Calu3 (cell line): ENCODE measurements at regions of chr4 and their contacts with region 1.

Region 1: GRCh38 chr4:23135792-23136645 is 443.3 kb downstream of the GBA3 start:
- DNase-seq: peak; percentile 30
- H3K4me3 Mint-ChIP-seq: no peak overlapping the region
- H3K27ac Mint-ChIP-seq: no peak overlapping the region
- H3K4me1 Mint-ChIP-seq: peaks cover 4% of the 10 kb centered on the region
- H3K27me3 Mint-ChIP-seq: no peaks in the 10 kb centered on the region
- CTCF ChIP-seq: no peak

Region 2: GRCh38 chr4:22787753-22788375 is 348.2 kb before region 1 on chr4:
- CTCF ChIA-PET with region 1: no interaction called
- intact Hi-C with region 1: no loop called
- DNase-seq: no peak
- H3K4me3 Mint-ChIP-seq: no peak overlapping the region
- H3K27ac Mint-ChIP-seq: no peak overlapping the region
- H3K4me1 Mint-ChIP-seq: no peaks in the 10 kb centered on the region
- H3K27me3 Mint-ChIP-seq: peaks cover 13% of the 10 kb centered on the region
- CTCF ChIP-seq: no peak

Region 3: DNA sequence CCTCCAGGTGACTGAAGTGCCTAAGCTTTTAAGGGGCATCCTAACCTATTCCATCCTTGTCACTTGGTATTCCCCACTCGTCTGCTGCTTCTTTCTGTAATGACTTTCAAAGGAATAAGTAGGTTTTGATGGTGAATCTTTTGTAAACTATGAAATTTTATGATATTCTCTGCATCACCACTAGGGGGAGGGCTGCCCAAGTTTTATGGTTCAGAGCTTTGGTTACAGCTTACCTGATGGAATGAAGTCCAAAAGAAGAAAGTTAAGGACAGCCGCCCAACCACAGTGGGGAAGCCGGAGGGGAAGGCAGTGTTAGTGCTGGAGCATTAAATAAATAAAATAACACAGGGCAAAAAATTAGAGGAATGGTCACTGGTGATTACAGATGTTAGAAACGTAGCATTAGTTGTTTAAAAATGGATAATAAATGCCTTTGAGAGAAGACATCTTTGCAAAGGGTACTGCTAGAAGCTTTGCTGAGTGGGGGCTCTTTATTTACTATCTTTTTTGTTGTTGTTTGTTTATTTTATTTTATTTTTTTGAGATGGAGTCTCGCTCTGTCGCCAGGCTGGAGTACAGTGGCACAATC is 238.4 kb before region 1 on chr4:
- CTCF ChIA-PET with region 1: interaction called, 7 read pairs
- intact Hi-C with region 1: loop called (anchors 5 kb)
- DNase-seq: peak; percentile 54
- H3K4me3 Mint-ChIP-seq: no peak overlapping the region
- H3K27ac Mint-ChIP-seq: peak overlapping the region; percentile 10
- H3K4me1 Mint-ChIP-seq: peaks cover 9% of the 10 kb centered on the region
- H3K27me3 Mint-ChIP-seq: no peaks in the 10 kb centered on the region
- CTCF ChIP-seq: peak; percentile 34

Region 4: GRCh38 chr4:23039813-23040212 is 96.2 kb before region 1 on chr4:
- CTCF ChIA-PET with region 1: no interaction called
- intact Hi-C with region 1: loop called (anchors 10 kb)
- DNase-seq: peak; percentile 38
- H3K4me3 Mint-ChIP-seq: no peak overlapping the region
- H3K27ac Mint-ChIP-seq: peak overlapping the region; percentile 89
- H3K4me1 Mint-ChIP-seq: peaks cover 20% of the 10 kb centered on the region
- H3K27me3 Mint-ChIP-seq: no peaks in the 10 kb centered on the region
- CTCF ChIP-seq: no peak

Region 5: GRCh38 chr4:23219779-23220408 is 83.9 kb after region 1 on chr4:
- CTCF ChIA-PET with region 1: no interaction called
- intact Hi-C with region 1: no loop called
- DNase-seq: no peak
- H3K4me3 Mint-ChIP-seq: no peak overlapping the region
- H3K27ac Mint-ChIP-seq: no peak overlapping the region
- H3K4me1 Mint-ChIP-seq: no peaks in the 10 kb centered on the region
- H3K27me3 Mint-ChIP-seq: no peaks in the 10 kb centered on the region
- CTCF ChIP-seq: no peak

Region 6: GRCh38 chr4:23324021-23324690 is 188.1 kb after region 1 on chr4:
- CTCF ChIA-PET with region 1: no interaction called
- intact Hi-C with region 1: loop called (anchors 10 kb)
- DNase-seq: no peak
- H3K4me3 Mint-ChIP-seq: no peak overlapping the region
- H3K27ac Mint-ChIP-seq: no peak overlapping the region
- H3K4me1 Mint-ChIP-seq: peaks cover 19% of the 10 kb centered on the region
- H3K27me3 Mint-ChIP-seq: no peaks in the 10 kb centered on the region
- CTCF ChIP-seq: no peak

Region 7: GRCh38 chr4:23567338-23567737 is 431.3 kb after region 1 on chr4:
- CTCF ChIA-PET with region 1: no interaction called
- intact Hi-C with region 1: no loop called
- DNase-seq: no peak
- H3K4me3 Mint-ChIP-seq: no peak overlapping the region
- H3K27ac Mint-ChIP-seq: no peak overlapping the region
- H3K4me1 Mint-ChIP-seq: no peaks in the 10 kb centered on the region
- H3K27me3 Mint-ChIP-seq: no peaks in the 10 kb centered on the region
- CTCF ChIP-seq: no peak